ENCODE measurements at regions of chr12 and their contacts with region 1.

Region 1: DNA sequence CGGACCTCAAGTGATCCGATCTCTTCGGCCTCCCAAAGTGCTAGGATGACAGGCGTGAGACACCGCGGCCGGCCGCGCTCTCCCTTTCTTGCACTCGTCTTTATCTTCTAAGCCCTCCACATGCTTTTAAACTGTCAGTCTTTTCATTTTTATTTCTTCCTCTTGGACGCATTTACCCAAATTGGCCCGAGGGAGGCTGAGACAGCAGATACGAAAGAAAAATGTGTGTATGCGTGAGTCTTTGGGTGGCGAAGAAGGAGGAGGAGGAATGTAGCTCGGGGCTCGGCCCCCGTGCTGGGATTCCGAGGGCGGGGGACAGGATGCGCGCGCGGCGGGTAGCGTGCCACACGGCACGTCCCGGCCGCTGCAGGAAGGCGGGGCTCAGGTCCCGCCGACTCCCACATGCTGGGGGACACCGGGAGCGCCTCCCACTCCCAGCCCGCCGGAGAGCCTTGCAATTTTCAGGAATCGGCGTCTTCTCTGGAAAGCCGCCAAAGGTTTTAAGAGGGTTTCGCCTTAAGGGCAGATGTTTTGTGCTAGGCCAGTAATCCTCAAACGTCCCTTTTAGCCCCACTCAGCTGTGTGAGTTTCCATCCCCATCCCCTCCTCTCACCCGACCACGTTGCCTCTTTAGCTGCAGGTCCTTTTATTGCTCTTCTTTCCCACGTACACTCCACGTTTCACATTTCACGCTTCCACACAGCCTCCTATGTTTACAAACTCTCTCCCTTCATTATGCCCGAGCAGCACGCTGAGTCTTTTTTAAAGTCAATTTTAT is 34.7 kb upstream of the SLC2A3 start:
- DNase-seq: peak; percentile 83 to 90 (median 86)
- H3K4me3 ChIP-seq: peak overlapping the region; percentile 70 to 83
- H3K4me3 Mint-ChIP-seq: peak overlapping the region; percentile 82 to 95 (median 90)
- H3K27ac ChIP-seq: peak overlapping the region; percentile 93
- H3K27ac Mint-ChIP-seq: peak overlapping the region; percentile 92 to 100 (median 98)
- H3K4me1 ChIP-seq: peaks cover 34% of the 10 kb centered on the region
- H3K4me1 Mint-ChIP-seq: peaks cover 15 to 29% (median 24%) of the 10 kb centered on the region in 4 donors
- H3K27me3 ChIP-seq: no peaks in the 10 kb centered on the region
- H3K27me3 Mint-ChIP-seq: peaks cover 0 to 3% of the 10 kb centered on the region in 2 donors

Region 2: DNA sequence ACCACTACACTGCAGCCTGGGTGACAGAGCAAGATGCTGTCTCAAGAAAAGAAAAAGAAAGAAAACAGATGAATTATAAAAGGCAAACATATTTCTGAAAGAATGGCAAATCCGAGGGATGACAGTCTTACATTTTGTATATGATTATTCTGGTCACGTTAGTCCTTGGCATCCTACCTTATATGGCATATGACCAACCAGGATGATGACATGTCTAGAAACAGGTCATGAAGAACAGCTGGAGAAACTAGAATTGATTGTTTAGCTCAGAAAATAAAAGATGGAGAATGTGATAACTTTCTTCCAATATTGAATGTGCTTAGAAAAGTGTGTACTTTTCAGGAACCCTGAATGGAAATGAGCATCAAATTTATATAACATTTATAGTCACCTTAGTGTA is 117.1 kb before region 1 on chr12:
- CTCF ChIA-PET with region 1: no interaction called
- POLR2A ChIA-PET with region 1: no interaction called
- intact Hi-C with region 1: no loop called
- DNase-seq: no peak
- H3K4me3 ChIP-seq: no peak overlapping the region
- H3K4me3 Mint-ChIP-seq: no peak overlapping the region
- H3K27ac ChIP-seq: no peak overlapping the region
- H3K27ac Mint-ChIP-seq: no peak overlapping the region
- H3K4me1 ChIP-seq: no peaks in the 10 kb centered on the region
- H3K4me1 Mint-ChIP-seq: no peaks in the 10 kb centered on the region
- H3K27me3 ChIP-seq: peaks cover 4% of the 10 kb centered on the region
- H3K27me3 Mint-ChIP-seq: peaks cover 12 to 15% of the 10 kb centered on the region in 2 donors

Region 3: DNA sequence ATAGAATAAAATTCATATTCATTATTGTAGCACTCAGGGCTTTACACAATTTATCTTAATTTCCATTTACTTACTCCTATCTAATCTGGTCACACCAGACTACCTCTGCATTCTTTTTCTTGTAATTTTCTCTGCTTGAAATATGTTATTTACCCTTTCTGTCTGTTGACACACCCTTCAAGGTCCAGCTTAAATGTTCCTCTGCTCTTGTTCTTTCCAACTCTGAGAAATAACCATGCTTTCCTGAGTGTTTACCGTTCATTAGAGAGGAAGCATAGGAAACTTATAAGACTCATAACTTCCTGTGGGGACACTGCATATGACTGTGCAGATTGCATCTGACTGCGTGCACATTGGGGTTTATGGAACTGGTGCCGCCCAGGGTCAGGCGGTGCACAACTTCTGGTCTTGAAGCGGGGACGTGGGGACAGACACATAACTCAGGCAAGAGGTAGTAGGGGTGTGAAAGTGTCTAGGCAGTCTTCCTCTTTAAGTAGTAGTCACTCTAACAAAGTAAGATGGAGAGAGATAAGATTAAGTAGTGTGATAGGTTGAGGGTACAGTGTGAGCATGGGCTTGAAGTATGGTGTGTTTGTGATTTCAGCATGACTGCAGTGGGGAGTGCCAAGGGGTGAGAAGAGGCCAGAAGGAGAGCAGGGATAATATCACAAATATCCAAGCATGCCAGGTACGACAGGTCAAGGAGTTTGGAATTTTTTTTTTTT is 19.3 kb after region 1 on chr12:
- CTCF ChIA-PET with region 1: interaction called, 14 read pairs
- POLR2A ChIA-PET with region 1: interaction called, 35 read pairs
- intact Hi-C with region 1: loop called (anchors 1 kb)
- DNase-seq: peak; percentile 60 to 85 (median 67)
- H3K4me3 ChIP-seq: peak overlapping the region; percentile 14 to 46
- H3K4me3 Mint-ChIP-seq: peak overlapping the region; percentile 64 to 90 (median 80)
- H3K27ac ChIP-seq: peak overlapping the region; percentile 57
- H3K27ac Mint-ChIP-seq: peak overlapping the region; percentile 79 to 98 (median 95)
- H3K4me1 ChIP-seq: peaks cover 44% of the 10 kb centered on the region
- H3K4me1 Mint-ChIP-seq: peaks cover 21 to 36% (median 26%) of the 10 kb centered on the region in 4 donors
- H3K27me3 ChIP-seq: no peaks in the 10 kb centered on the region
- H3K27me3 Mint-ChIP-seq: no peaks in the 10 kb centered on the region

Region 4: GRCh38 chr12:8226355-8226754 is 255.7 kb after region 1 on chr12:
- CTCF ChIA-PET with region 1: no interaction called
- POLR2A ChIA-PET with region 1: no interaction called
- intact Hi-C with region 1: no loop called
- DNase-seq: no peak
- H3K4me3 ChIP-seq: no peak overlapping the region
- H3K4me3 Mint-ChIP-seq: no peak overlapping the region
- H3K27ac ChIP-seq: no peak overlapping the region
- H3K27ac Mint-ChIP-seq: peak overlapping the region in 1 of 7 donors; percentile 19
- H3K4me1 ChIP-seq: no peaks in the 10 kb centered on the region
- H3K4me1 Mint-ChIP-seq: peaks cover 0 to 14% (median 0%) of the 10 kb centered on the region in 4 donors
- H3K27me3 ChIP-seq: no peaks in the 10 kb centered on the region
- H3K27me3 Mint-ChIP-seq: peaks cover 2 to 3% of the 10 kb centered on the region in 2 donors